K562 (cell line): ENCODE measurements at regions of chr17 and their contacts with region 1.

Region 1: DNA sequence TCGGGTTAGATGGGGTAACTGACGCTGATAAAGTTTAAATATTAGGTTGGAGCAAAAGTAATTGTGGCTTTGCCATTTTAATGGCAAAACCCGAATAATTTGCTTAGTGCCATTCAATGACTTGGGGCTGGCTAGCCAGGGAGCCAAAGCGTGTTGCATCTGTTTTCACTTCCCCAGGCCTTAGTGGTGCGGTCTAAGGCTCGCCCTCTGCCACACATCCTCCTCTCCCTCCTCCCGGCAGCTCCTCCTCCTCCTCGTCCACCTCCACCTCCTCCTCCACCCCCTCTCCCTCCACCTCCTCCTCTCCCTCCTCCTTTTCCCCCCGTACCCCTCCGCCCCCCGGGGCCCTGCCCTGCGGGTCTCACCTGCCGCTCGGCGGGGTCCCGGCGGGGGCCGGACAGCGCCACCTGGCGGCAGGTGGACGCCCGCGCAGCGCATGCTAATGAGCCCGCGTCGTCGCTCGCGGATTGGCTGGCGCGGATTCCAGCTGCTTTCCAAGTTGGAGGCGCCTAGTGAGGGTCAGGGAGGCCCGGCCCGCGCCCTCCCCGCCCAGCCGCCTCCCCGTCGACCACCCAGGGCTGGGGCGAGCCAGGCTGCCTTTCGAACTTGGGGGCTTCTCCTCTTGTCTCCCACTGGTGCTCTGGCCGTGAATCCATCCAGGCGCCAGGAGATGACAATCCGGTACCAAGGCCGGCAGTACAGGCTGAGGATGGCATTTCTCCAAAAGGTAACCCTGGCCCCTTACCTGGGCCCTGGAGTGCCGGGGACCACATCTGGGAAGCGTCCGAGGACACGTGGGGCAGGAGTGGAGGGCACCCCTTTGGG is 36.6 kb upstream of the RGS9 start:
- DNase-seq: peak; percentile 86 to 90 (median 88)
- ATAC-seq: peak; percentile 98
- H3K4me3 ChIP-seq: peak overlapping the region; percentile 40
- H3K27ac ChIP-seq: no peak overlapping the region
- H3K4me1 ChIP-seq: peaks cover 7 to 11% of the 10 kb centered on the region in 2 experiments; a peak in 3 of 5 replicates
- H3K27me3 ChIP-seq: peaks cover 3 to 18% of the 10 kb centered on the region in 2 experiments; a peak in 3 of 5 replicates
- CTCF ChIP-seq: peak; percentile 80 to 87 (median 86)
- EP300 ChIP-seq: no peak
- POLR2A ChIP-seq: no peak
- RAD21 ChIP-seq: peak; percentile 70 to 73

Region 2: GRCh38 chr17:64968652-64969501 is 131.7 kb before region 1 on chr17:
- CTCF ChIA-PET with region 1: no interaction called
- POLR2A ChIA-PET with region 1: interaction called, 3 read pairs
- in situ Hi-C with region 1: no loop called
- intact Hi-C with region 1: loop called (anchors 10 kb)
- DNase-seq: no peak
- ATAC-seq: no peak
- H3K4me3 ChIP-seq: no peak overlapping the region
- H3K27ac ChIP-seq: no peak overlapping the region
- H3K4me1 ChIP-seq: peaks cover 6 to 11% of the 10 kb centered on the region in 2 experiments
- H3K27me3 ChIP-seq: no peaks in the 10 kb centered on the region
- CTCF ChIP-seq: no peak
- EP300 ChIP-seq: no peak
- POLR2A ChIP-seq: no peak
- RAD21 ChIP-seq: no peak

Region 3: DNA sequence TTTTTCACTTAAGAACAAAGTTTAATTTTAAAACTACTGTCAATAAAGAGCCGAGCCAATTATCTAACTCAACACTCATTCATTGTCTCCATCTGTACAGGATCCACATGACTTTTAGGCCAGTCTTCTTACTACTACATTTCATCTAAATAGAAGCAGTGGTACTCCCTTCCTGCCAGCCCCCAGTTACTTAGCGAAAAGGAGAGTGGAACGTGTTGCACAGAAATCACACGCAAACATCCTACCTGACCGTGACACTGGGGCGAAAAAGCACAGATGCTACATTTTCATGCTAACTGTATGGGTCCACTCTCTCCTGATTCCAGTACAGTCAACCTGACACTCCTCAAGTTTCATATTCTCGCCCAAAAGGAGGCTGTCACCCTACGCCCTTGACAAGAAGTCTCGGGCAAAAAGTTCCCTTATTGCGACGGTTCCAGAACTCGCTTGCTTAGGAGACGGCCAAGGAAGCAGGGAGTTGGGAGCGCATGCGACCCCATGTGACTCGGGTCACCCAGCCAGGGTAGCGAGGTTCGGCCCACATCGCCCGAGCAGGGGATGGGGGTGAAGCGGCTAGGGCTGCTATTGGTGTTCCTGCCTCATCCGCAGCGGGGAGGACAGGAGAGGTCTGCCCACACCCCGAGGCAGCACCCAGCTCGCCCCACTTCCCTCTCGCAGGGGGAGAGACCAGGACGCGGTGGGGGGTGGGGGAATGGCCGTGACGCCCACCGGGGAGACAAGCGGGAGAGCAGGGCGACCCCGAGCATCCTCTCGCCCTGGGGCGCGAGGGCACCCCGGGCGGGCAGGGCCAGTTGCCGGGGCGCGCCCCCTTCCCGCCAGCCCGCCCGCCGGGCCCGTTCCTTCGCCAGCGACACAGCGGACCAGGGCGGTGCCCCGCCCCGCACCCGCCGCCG is 44.9 kb before region 1 on chr17:
- CTCF ChIA-PET with region 1: no interaction called
- POLR2A ChIA-PET with region 1: no interaction called
- in situ Hi-C with region 1: no loop called
- intact Hi-C with region 1: loop called (anchors 2 kb)
- DNase-seq: peak; percentile 48 to 67 (median 63)
- ATAC-seq: peak; percentile 63
- H3K4me3 ChIP-seq: peak overlapping the region; percentile 95
- H3K27ac ChIP-seq: peak overlapping the region; percentile 98
- H3K4me1 ChIP-seq: peaks cover 20 to 21% of the 10 kb centered on the region in 2 experiments; a peak in 4 of 5 replicates
- H3K27me3 ChIP-seq: no peaks in the 10 kb centered on the region
- CTCF ChIP-seq: no peak
- EP300 ChIP-seq: no peak
- POLR2A ChIP-seq: no peak
- RAD21 ChIP-seq: no peak

Region 4: DNA sequence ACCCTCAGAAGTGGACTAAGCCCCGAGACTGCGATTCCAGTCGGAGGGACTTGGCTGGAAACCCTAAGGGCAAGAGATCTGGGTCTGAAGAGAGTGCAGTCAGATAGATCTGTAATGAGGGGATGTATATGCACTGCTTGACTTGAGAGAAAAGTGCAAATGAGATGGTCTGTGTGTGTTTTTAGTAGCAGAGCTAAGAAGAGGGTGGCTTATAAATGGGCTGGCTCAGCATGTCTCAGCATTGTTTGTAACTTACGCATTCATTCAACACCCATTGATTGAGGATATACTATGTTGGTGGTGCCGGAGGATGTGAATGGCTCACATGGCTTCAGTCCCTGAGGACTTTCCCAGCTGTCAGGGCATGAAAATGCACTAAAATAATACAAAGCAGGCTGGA is 143.7 kb after region 1 on chr17:
- CTCF ChIA-PET with region 1: no interaction called
- POLR2A ChIA-PET with region 1: no interaction called
- in situ Hi-C with region 1: no loop called
- intact Hi-C with region 1: no loop called
- DNase-seq: no peak
- ATAC-seq: no peak
- H3K4me3 ChIP-seq: no peak overlapping the region
- H3K27ac ChIP-seq: no peak overlapping the region
- H3K4me1 ChIP-seq: no peaks in the 10 kb centered on the region
- H3K27me3 ChIP-seq: peaks cover 15 to 34% of the 10 kb centered on the region in 2 experiments; a peak in 4 of 5 replicates
- CTCF ChIP-seq: no peak
- EP300 ChIP-seq: no peak
- POLR2A ChIP-seq: no peak
- RAD21 ChIP-seq: no peak

Region 5: DNA sequence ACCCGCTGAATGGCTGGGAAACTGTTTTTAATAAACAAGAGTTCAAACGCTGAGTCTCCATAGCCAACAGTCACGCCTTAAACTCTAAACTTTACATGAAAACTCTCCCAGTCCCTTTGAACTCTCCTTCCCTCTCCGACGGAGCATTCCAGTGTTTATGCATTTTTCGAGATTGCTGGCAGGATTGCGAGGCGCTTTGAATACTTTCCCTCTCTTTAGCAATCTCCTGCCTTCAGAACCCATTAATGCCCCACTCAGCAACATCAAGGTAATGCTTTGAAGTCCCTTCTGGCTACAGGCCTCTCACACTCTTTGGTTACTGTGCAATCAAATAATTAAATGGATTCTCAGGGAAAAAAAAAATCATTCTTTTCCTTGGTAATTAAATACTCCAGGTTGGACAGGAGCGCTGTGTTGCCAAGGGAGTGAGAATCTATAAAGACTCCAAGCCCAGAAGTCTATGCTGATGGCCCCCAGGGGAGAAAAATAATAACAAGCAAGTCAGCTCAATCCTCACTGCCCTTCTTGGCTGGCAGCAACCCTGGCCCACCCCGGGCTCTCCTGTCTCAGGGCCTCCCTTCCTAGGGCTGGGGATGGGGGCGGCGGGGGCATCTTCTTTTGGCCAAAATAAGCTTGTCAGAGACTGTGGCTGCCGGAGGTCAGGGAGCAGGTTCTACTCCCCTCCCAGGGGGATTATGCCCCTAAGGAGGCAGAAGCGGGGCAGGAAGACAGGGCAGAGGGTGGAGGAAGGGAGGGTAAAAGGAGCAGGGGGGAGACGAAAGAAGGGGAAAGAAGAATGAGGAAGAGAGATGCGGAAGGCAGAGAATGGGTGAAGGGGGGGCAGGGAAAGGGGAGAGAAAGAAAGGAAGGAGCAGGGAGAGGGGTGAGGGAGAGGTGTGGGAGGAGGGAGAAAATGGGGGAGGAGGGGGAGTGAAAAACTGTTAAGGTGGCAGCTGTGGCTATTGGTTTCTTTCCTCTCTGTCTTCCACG is 415.7 kb after region 1 on chr17:
- CTCF ChIA-PET with region 1: no interaction called
- POLR2A ChIA-PET with region 1: no interaction called
- in situ Hi-C with region 1: no loop called
- intact Hi-C with region 1: no loop called
- DNase-seq: no peak
- ATAC-seq: no peak
- H3K4me3 ChIP-seq: no peak overlapping the region
- H3K27ac ChIP-seq: no peak overlapping the region
- H3K4me1 ChIP-seq: no peaks in the 10 kb centered on the region
- H3K27me3 ChIP-seq: peaks cover 0 to 19% of the 10 kb centered on the region in 2 experiments; a peak in 2 of 5 replicates
- CTCF ChIP-seq: no peak
- EP300 ChIP-seq: no peak
- POLR2A ChIP-seq: no peak
- RAD21 ChIP-seq: no peak